PC-3 (cell line): ENCODE measurements at regions of chr15 and their contacts with region 1.

Region 1: DNA sequence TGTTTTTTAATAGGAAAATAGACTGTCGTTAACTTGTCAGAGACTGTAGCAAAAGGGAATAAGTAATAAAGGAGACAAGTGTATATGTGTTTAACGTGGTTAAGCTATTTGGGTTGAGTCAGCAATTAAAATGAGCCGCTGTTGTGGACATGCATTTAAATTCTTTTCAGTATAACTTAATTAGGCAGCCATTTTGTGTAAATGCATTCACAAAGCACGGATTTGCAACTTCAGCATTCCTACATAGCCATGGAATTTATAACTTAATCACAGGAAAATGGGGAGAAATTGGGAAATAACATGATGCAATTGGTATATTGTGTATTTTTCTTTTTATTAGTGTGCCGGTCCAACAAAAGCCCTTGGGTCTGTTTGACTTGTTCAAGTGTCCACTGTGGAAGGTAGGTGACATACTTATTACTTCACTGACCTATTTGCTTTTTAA is 27.9 kb downstream of the USP3 start:
- DNase-seq: peak; percentile 52
- ATAC-seq: peak; percentile 75
- H3K4me3 ChIP-seq: peak overlapping the region; percentile 34; the same call in 1 of the 2 replicates
- H3K27ac ChIP-seq: peak overlapping the region; percentile 27
- H3K4me1 ChIP-seq: peaks cover 18% of the 10 kb centered on the region
- H3K27me3 ChIP-seq: no peaks in the 10 kb centered on the region
- CTCF ChIP-seq: no peak

Region 2: GRCh38 chr15:63514531-63514943 is 17.8 kb before region 1 on chr15:
- CTCF ChIA-PET with region 1: no interaction called
- POLR2A ChIA-PET with region 1: no interaction called
- intact Hi-C with region 1: loop called (anchors 2 kb)
- DNase-seq: peak; percentile 81
- ATAC-seq: peak; percentile 57
- H3K4me3 ChIP-seq: peak overlapping the region; percentile 46
- H3K27ac ChIP-seq: peak overlapping the region; percentile 55
- H3K4me1 ChIP-seq: peaks cover 66% of the 10 kb centered on the region
- H3K27me3 ChIP-seq: no peaks in the 10 kb centered on the region
- CTCF ChIP-seq: no peak

Region 3: DNA sequence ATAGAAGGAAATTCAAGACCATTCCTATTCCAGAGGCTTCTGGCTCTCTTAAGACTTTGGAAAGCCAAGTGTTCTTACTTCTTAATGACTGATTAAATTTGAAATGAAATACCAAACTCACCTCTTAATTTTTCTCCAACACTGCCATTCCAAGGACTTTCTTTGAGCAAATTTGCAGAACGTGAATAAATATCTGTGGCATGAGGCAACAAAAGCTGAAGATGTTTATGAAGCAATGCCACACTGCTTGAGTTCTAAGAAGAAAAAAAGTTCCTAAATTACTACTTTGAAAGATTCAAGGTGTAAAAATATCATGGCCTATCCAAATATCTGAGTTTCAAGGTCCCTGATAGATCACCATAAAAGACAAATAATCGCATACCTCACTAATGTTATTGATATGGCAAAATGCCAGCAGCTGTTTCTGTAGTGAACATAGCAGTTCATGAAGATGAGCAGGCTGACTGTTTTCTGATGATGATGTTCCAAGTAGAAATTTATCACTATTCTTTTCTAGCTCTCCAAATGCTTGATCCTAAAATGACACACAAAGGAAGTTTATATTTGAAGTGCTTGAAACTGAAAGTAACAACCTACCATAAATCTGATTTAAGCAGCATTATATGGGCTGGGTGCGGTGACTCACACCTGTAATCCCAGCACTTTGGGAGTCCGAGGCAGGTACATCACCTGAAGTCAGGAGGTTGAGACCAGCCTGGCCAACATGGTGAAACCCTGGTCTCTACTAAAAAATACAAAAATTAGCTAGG is 197.0 kb after region 1 on chr15:
- CTCF ChIA-PET with region 1: no interaction called
- POLR2A ChIA-PET with region 1: no interaction called
- intact Hi-C with region 1: no loop called
- DNase-seq: peak; percentile 25
- ATAC-seq: no peak
- H3K4me3 ChIP-seq: no peak overlapping the region
- H3K27ac ChIP-seq: no peak overlapping the region
- H3K4me1 ChIP-seq: no peaks in the 10 kb centered on the region
- H3K27me3 ChIP-seq: no peaks in the 10 kb centered on the region
- CTCF ChIP-seq: no peak